ENCODE measurements at regions of chr11 and their contacts with region 1.

Region 1: GRCh38 chr11:120281143-120281795 is 41.3 kb downstream of the POU2F3 start:
- DNase-seq: no peak
- H3K4me3 ChIP-seq: no peak overlapping the region
- H3K27ac ChIP-seq: no peak overlapping the region
- H3K4me1 ChIP-seq: peaks cover 0 to 5% (median 0%) of the 10 kb centered on the region in 4 experiments; a peak in 3 of 7 replicates
- H3K27me3 ChIP-seq: peaks cover 0 to 2% (median 0%) of the 10 kb centered on the region in 4 experiments; a peak in 1 of 7 replicates
- CTCF ChIP-seq: no peak
- EP300 ChIP-seq: no peak
- POLR2A ChIP-seq: no peak
- RAD21 ChIP-seq: no peak

Region 2: DNA sequence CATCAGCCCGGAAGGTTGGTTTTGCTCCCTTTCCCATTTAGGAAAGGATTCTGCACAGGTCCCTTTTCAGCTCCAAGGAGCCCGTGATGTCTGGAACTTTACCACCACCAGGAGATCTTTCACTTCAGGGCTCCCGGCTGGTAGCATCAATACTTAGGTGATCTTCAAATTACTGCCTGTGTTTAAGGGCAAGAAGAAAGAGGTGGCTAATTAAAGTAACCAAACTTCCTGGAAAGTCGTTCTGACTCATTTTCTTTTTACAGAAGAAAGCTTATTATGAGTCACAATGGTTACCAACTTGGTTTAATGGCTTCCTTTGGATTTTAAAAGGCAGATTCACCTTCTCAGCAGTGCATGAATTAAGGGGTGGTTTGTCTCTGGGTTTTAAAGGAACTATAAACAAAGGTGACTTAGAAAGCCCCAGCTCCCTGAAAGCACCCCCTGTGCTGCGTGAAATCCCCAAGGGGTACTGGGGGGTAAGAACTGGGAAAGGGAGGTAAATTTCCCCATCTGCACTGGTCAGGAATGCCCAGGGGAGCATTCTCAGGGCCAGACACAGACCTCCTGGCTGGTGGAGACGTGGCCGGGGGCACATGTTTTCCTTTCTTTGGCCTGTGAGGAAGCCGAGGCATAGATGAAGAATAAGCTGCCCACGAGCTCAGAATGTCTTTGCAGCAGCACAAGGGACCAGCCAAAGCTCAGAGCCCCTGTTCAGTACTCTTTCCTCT is 32.6 kb before region 1 on chr11:
- CTCF ChIA-PET with region 1: interaction called, 1,412 read pairs
- POLR2A ChIA-PET with region 1: no interaction called
- DNase-seq: no peak
- H3K4me3 ChIP-seq: no peak overlapping the region
- H3K27ac ChIP-seq: 0 out of 2 replicates have a peak overlapping the region, but pooled peaks have one; percentile 31
- H3K4me1 ChIP-seq: peaks cover 0 to 16% (median 5%) of the 10 kb centered on the region in 4 experiments
- H3K27me3 ChIP-seq: no peaks in the 10 kb centered on the region
- CTCF ChIP-seq: no peak
- EP300 ChIP-seq: peak in 1 of 2 experiments; percentile 17; a peak in 1 of 3 replicates
- POLR2A ChIP-seq: no peak
- RAD21 ChIP-seq: no peak

Measured in H1 (cell line).